Posterior vena cava (tissue), 2 donors: ENCODE measurements at regions of chr7 and their contacts with region 1.

Region 1: DNA sequence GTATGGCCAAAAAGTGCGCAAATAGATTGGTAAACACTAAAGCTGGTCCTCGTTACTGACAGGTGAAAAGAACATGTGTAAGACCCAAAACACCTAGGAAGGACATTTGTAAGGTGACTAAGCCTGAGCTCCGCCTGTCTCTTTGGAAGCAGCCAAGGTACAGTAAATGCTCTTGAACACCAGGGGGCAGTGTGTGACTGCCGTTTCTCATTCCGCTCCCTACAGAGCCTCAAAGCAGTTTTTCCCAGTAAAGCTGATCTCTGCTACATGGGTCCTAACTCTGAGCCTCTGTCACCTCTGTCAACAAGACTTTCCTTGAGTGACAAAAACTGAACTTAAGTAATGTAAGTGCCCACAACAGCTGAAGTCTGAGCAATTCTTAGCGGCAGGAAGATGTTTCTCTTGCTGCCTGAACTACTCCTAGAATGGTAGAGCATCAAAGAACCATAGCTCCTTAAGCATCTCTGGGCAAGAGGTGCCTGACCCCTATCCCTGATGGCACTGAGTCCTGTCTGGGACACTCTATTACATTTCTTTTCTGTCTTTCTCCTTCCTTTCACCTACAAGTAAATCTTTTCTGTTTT is 238.0 kb upstream of the INHBA start:
- DNase-seq: peak; percentile 84

Region 2: DNA sequence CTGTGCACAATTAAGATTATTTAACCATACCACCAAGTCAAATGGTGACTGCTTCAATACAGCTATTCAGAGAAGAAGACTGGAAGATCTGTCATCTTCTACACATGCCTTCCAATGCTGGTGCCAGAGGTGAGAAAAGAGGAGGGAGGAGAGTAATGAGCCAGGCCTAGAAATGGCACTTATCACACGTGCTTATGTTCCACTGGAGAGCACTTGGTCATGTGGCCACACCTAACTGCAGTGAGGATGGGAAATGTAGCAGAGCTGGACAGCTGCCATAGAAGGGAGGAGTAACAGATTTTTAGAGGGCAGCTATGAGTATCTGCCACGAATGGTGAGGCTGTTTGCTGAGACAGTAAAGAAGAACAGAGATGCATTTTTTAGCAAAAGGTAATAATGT is 1883.6 kb before region 1 on chr7:
- intact Hi-C with region 1: no loop called
- DNase-seq: no peak

Region 3: GRCh38 chr7:41437257-41438196 is 503.3 kb before region 1 on chr7:
- intact Hi-C with region 1: no loop called
- DNase-seq: no peak

Region 4: DNA sequence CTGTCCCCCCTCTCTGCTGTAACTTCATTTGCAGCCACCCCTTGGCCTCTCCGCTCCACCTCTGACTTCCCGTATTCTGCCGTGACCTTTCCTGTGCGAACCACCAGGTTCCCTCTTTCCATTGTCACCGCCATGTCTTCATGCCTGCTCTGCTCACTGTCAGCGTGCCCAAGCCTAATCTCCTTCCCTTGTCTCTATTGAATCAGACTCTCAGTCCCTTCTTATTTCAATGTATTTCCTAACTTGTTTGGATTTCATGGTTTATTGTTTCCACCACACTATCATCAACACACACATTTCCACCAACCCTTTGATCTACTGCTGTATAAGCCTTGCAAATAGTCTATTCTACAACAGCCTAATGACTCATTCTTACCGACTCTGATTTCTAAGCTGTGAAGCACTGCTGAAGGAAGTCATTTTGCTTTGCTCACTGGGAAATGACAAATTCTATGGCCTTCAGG is 208.0 kb before region 1 on chr7:
- intact Hi-C with region 1: no loop called
- DNase-seq: no peak

Region 5: GRCh38 chr7:41977151-41977651 is 36.3 kb after region 1 on chr7:
- intact Hi-C with region 1: no loop called
- DNase-seq: no peak

Region 6: DNA sequence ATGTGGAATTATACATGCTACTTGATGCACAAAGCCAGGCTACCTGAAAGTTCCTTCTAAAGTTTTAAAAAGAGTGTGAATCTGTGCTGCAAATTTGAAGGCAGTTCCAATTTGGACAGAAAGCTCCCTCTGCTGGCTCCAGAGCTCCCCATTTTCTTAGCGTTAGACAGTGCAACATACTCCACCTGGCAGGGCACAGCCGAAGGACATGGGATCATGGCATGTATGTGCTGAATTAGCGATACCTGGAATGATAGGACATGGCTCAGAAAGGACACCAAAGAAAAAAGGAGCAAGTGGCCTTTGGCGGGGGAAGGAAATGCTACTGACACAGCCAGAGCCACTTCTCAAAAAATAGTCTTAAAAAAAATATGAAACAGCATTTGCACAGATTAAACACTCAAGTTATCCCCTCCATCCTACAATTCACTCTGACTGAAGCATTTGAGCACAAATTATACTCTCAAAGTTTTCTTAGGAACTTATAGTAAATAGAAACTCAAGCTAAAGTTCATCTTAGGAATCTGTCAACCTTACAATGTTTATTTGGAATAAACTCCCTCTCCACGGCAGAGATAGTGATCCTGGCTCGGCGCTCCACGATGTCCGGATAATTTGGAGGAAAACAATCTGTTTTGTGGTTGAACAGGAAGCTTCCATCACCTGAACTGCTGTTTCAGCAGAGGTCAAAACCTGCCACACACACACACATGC is 891.0 kb after region 1 on chr7:
- intact Hi-C with region 1: loop called in 1 of 2 experiments (anchors 5 kb)
- DNase-seq: no peak

Region 7: GRCh38 chr7:42843205-42843800 is 902.5 kb after region 1 on chr7:
- intact Hi-C with region 1: loop called in 1 of 2 experiments (anchors 10 kb)
- DNase-seq: no peak